B cell (primary cell): ENCODE measurements at regions of chr10 and their contacts with region 1.

Region 1: GRCh38 chr10:109883859-109884771 is 39.2 kb downstream of the XPNPEP1 start:
- DNase-seq: peak; percentile 70
- ATAC-seq: peak; percentile 76
- H3K4me3 ChIP-seq: no peak overlapping the region
- H3K4me3 Mint-ChIP-seq: no peak overlapping the region
- H3K27ac ChIP-seq: no peak overlapping the region
- H3K27ac Mint-ChIP-seq: peak overlapping the region; percentile 46
- H3K4me1 ChIP-seq: no peaks in the 10 kb centered on the region
- H3K4me1 Mint-ChIP-seq: peaks cover 4% of the 10 kb centered on the region
- H3K27me3 ChIP-seq: no peaks in the 10 kb centered on the region
- H3K27me3 Mint-ChIP-seq: no peaks in the 10 kb centered on the region
- CTCF ChIP-seq: peak; percentile 98

Region 2: DNA sequence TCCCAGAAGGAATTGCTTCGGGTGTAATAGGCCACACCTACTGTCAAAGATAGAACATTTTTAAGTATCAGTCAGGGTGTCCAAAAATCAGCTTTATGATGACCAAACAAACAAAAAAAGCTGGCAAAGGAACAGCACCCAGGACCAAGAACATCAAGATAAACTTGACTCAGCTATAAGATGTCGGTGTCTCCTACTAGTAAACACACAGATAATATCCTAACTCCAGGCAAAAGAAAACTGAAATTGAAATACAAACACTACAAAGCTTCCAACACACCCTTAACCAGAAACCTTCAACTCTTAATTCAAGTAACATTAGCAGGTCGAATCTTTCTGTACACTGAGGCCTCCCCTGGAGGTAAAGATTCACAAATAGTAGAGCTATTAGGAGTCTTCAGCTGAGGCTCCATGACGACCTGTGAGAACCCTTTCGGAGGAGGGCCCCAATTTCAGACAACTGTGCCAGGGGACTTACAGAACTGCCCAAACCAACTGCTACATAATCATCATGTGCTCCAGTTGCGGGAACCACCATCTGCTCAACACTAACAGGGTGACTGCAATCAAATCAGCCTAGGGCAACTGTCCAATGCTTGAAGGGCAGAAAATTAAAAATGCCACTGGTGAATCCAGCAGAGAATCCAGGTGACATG is 18.9 kb after region 1 on chr10:
- CTCF ChIA-PET with region 1: interaction called, 21 read pairs
- POLR2A ChIA-PET with region 1: no interaction called
- intact Hi-C with region 1: no loop called
- DNase-seq: no peak
- ATAC-seq: no peak
- H3K4me3 ChIP-seq: no peak overlapping the region
- H3K4me3 Mint-ChIP-seq: peak overlapping the region; percentile 6
- H3K27ac ChIP-seq: no peak overlapping the region
- H3K27ac Mint-ChIP-seq: no peak overlapping the region
- H3K4me1 ChIP-seq: peaks cover 4% of the 10 kb centered on the region in 2 donors
- H3K4me1 Mint-ChIP-seq: peaks cover 20% of the 10 kb centered on the region
- H3K27me3 ChIP-seq: no peaks in the 10 kb centered on the region
- H3K27me3 Mint-ChIP-seq: no peaks in the 10 kb centered on the region
- CTCF ChIP-seq: no peak

Region 3: DNA sequence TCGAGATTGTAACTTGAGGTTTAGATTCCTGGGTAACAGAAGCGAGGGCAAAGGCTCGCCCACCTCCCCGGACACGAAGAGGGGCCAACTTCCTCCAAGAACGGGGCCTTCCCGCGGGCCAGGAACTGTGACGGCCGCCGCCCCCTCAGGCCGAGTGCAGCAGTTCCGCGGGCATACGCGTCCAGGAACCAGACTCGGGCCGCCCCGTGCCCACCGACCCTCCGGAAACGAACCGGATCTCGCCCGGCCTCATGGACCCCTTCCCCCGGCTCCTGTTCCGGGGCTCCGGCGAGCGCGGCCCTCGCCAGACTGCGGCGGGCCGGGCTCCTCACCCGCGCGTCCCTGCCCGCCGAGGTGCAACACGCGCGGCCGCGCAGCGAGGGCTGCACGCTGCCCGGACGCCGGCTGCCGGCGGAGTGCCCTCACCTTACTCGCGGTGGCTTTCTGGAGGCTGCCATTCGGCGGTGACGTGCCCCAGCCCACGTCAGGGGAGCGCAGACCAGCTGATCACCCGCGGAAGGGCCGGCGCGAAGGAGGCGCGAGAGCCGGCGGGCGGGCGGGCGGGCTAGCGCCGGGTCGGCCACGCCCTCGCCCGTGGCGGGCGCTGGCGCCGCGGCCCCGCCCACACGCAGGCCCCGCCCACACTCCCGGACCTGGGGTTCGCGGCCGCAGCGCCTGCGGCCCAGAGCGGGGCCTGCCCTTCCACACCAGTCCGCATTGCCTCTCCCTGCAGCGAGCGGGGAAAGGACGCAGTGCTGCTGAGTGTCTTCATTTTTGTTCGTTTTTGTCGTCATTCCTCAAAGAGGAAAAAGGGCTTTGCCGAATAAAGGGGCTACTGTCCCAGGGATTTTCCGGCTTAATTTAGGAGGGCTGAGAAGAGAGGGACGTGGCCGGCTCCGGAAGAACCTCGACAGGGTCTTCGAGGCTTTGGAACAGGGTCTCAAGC is 39.1 kb after region 1 on chr10 and contains the start of gene XPNPEP1:
- CTCF ChIA-PET with region 1: interaction called, 5 read pairs
- POLR2A ChIA-PET with region 1: no interaction called
- intact Hi-C with region 1: loop called (anchors 2 kb)
- DNase-seq: peak; percentile 92
- ATAC-seq: peak; percentile 96
- H3K4me3 ChIP-seq: peak within 1 kb of the TSS; percentile 55 to 91 (median 75)
- H3K4me3 Mint-ChIP-seq: peak within 1 kb of the TSS; percentile 90
- H3K27ac ChIP-seq: peak within 1 kb of the TSS; percentile 60 to 81
- H3K27ac Mint-ChIP-seq: peak within 1 kb of the TSS; percentile 88
- H3K4me1 ChIP-seq: peaks cover 18 to 23% of the 10 kb centered on the region in 2 donors
- H3K4me1 Mint-ChIP-seq: peaks cover 39% of the 10 kb centered on the region
- H3K27me3 ChIP-seq: no peaks in the 10 kb centered on the region
- H3K27me3 Mint-ChIP-seq: no peaks in the 10 kb centered on the region
- CTCF ChIP-seq: no peak
- total RNA-seq, gene XPNPEP1: 56.1 and 60.6 TPM in 2 replicates

Region 4: GRCh38 chr10:109978481-109978880 is 94.4 kb after region 1 on chr10:
- CTCF ChIA-PET with region 1: interaction called, 8 read pairs
- POLR2A ChIA-PET with region 1: no interaction called
- intact Hi-C with region 1: loop called (anchors 1 kb)
- DNase-seq: peak; percentile 68
- ATAC-seq: no peak
- H3K4me3 ChIP-seq: no peak overlapping the region
- H3K4me3 Mint-ChIP-seq: no peak overlapping the region
- H3K27ac ChIP-seq: no peak overlapping the region
- H3K27ac Mint-ChIP-seq: no peak overlapping the region
- H3K4me1 ChIP-seq: no peaks in the 10 kb centered on the region
- H3K4me1 Mint-ChIP-seq: no peaks in the 10 kb centered on the region
- H3K27me3 ChIP-seq: no peaks in the 10 kb centered on the region
- H3K27me3 Mint-ChIP-seq: no peaks in the 10 kb centered on the region
- CTCF ChIP-seq: peak; percentile 90

Region 5: GRCh38 chr10:110101464-110102144 is 217.5 kb after region 1 on chr10:
- CTCF ChIA-PET with region 1: interaction called, 16 read pairs
- POLR2A ChIA-PET with region 1: no interaction called
- intact Hi-C with region 1: loop called (anchors 10 kb)
- DNase-seq: no peak
- ATAC-seq: no peak
- H3K4me3 ChIP-seq: no peak overlapping the region
- H3K4me3 Mint-ChIP-seq: no peak overlapping the region
- H3K27ac ChIP-seq: no peak overlapping the region
- H3K27ac Mint-ChIP-seq: peak overlapping the region; percentile 48
- H3K4me1 ChIP-seq: peaks cover 0 to 2% of the 10 kb centered on the region in 2 donors
- H3K4me1 Mint-ChIP-seq: peaks cover 35% of the 10 kb centered on the region
- H3K27me3 ChIP-seq: no peaks in the 10 kb centered on the region
- H3K27me3 Mint-ChIP-seq: no peaks in the 10 kb centered on the region
- CTCF ChIP-seq: no peak